Activated CD8-positive, alpha-beta memory T cell treated with anti-CD3 and anti-CD28 coated beads, Interleukin-2, amount 10 ng/mL, durations not matched to agents 7 days and 5 days (primary cell): ENCODE measurements at regions of chr10 and their contacts with region 1.

Region 1: GRCh38 chr10:48608279-48608681 is 3.4 kb upstream of the ARHGAP22 start:
- DNase-seq: peak; percentile 55
- ATAC-seq: peak; percentile 77
- H3K4me3 Mint-ChIP-seq: no peak overlapping the region
- H3K27ac Mint-ChIP-seq: no peak overlapping the region
- H3K4me1 Mint-ChIP-seq: peaks cover 2% of the 10 kb centered on the region
- H3K27me3 Mint-ChIP-seq: peaks cover 35% of the 10 kb centered on the region

Region 2: GRCh38 chr10:48634198-48634983 is 26.1 kb after region 1 on chr10:
- CTCF ChIA-PET with region 1: interaction called, 12 read pairs
- DNase-seq: peak; percentile 58
- ATAC-seq: peak; percentile 89
- H3K4me3 Mint-ChIP-seq: no peak overlapping the region
- H3K27ac Mint-ChIP-seq: no peak overlapping the region
- H3K4me1 Mint-ChIP-seq: peaks cover 15% of the 10 kb centered on the region
- H3K27me3 Mint-ChIP-seq: peaks cover 39% of the 10 kb centered on the region